ENCODE measurements at regions of chr16 and their contacts with region 1.

Region 1: GRCh38 chr16:79369796-79370195 is 230.7 kb downstream of the MAF start:
- DNase-seq: no peak
- ATAC-seq: no peak
- H3K4me3 ChIP-seq: no peak overlapping the region
- H3K27ac ChIP-seq: no peak overlapping the region
- H3K4me1 ChIP-seq: no peaks in the 10 kb centered on the region
- H3K27me3 ChIP-seq: no peaks in the 10 kb centered on the region
- CTCF ChIP-seq: no peak
- POLR2A ChIP-seq: no peak
- RAD21 ChIP-seq: no peak

Region 2: DNA sequence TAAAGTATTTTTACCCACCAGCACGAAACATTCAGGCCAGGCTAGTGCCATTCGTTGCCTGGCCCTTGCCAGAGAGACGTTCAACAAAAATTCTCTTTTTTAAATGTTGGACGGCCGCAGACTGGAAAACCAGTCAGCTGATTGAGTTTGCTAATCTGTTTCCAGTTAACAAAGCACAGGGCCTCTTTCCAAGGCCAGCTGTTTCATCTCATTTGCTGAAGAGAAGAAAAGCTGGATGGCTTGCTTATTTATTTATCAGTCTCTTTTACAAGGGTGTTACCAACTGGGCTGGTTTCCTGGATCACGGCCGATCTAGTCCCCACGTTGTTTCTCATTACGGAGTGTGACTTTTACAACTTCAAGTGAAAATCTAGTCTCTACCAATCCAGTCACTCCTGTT is 752.3 kb after region 1 on chr16:
- CTCF ChIA-PET with region 1: no interaction called
- POLR2A ChIA-PET with region 1: no interaction called
- RAD21 ChIA-PET with region 1: no interaction called
- intact Hi-C with region 1: loop called (anchors 5 kb)
- DNase-seq: no peak
- ATAC-seq: no peak
- H3K4me3 ChIP-seq: no peak overlapping the region
- H3K27ac ChIP-seq: no peak overlapping the region
- H3K4me1 ChIP-seq: no peaks in the 10 kb centered on the region
- H3K27me3 ChIP-seq: no peaks in the 10 kb centered on the region
- CTCF ChIP-seq: no peak
- POLR2A ChIP-seq: no peak
- RAD21 ChIP-seq: no peak

Measured in HCT116 (cell line).